ENCODE measurements at regions of chr10 and their contacts with region 1.

Region 1: GRCh38 chr10:130986846-130987245 is 324.7 kb downstream of the TCERG1L start:
- DNase-seq: peak in 1 of 2 donors; percentile 68
- H3K4me3 ChIP-seq: no peak overlapping the region
- CTCF ChIP-seq: no peak
- POLR2A ChIP-seq: no peak

Region 2: GRCh38 chr10:130967784-130968183 is 19.1 kb before region 1 on chr10:
- intact Hi-C with region 1: loop called (anchors 1 kb)
- DNase-seq: peak in 1 of 2 donors; percentile 36
- H3K4me3 ChIP-seq: no peak overlapping the region
- CTCF ChIP-seq: no peak
- POLR2A ChIP-seq: no peak

Measured in lower leg skin (tissue), 4 donors.